ENCODE measurements at regions of chr21 and their contacts with region 1.

Region 1: GRCh38 chr21:29849735-29850176 is 90.0 kb downstream of the GRIK1 start:
- DNase-seq: peak; percentile 69
- H3K4me3 Mint-ChIP-seq: no peak overlapping the region
- H3K27ac Mint-ChIP-seq: no peak overlapping the region
- H3K4me1 Mint-ChIP-seq: no peaks in the 10 kb centered on the region
- H3K27me3 Mint-ChIP-seq: no peaks in the 10 kb centered on the region
- CTCF ChIP-seq: peak; percentile 77

Region 2: GRCh38 chr21:29423099-29423498 is 426.7 kb before region 1 on chr21:
- CTCF ChIA-PET with region 1: no interaction called
- POLR2A ChIA-PET with region 1: no interaction called
- intact Hi-C with region 1: no loop called
- DNase-seq: no peak
- H3K4me3 Mint-ChIP-seq: no peak overlapping the region
- H3K27ac Mint-ChIP-seq: no peak overlapping the region
- H3K4me1 Mint-ChIP-seq: no peaks in the 10 kb centered on the region
- H3K27me3 Mint-ChIP-seq: no peaks in the 10 kb centered on the region
- CTCF ChIP-seq: no peak

Region 3: DNA sequence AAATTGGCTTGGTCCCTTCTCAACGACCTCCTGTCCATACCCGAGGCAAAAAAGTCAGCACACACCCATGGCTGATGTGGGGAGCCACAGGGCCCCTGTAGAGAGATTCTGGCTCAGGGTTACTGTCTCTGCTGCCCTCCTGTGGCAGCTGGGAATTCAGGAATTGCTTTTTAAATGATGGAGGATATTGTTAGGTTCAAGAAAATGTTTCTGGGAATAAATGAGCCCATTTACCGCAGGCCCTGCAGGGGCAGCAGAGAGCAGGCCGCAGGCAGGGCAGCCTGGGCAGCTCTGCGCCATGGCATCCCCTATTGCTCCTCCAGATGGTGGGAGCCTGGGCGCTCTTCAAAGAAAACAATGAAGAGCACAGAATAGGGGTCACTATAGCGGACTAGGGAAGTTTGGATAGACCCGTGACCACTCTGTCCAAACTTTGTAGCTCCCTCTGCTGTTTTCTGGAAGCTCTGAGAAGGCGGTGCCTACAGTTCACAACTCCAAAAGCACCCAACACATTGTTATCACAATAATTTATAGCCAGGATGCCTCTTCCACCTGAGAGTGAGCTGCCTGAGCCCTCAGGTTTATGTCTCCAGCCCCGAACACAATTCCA is 349.9 kb before region 1 on chr21:
- CTCF ChIA-PET with region 1: interaction called, 5 read pairs
- POLR2A ChIA-PET with region 1: interaction called, 3 read pairs
- intact Hi-C with region 1: loop called (anchors 5 kb)
- DNase-seq: peak; percentile 52
- H3K4me3 Mint-ChIP-seq: no peak overlapping the region
- H3K27ac Mint-ChIP-seq: no peak overlapping the region
- H3K4me1 Mint-ChIP-seq: peaks cover 6% of the 10 kb centered on the region
- H3K27me3 Mint-ChIP-seq: no peaks in the 10 kb centered on the region
- CTCF ChIP-seq: peak; percentile 48

Region 4: GRCh38 chr21:29860346-29860745 is 10.6 kb after region 1 on chr21:
- CTCF ChIA-PET with region 1: interaction called, 10 read pairs
- POLR2A ChIA-PET with region 1: no interaction called
- intact Hi-C with region 1: no loop called
- DNase-seq: no peak
- H3K4me3 Mint-ChIP-seq: no peak overlapping the region
- H3K27ac Mint-ChIP-seq: no peak overlapping the region
- H3K4me1 Mint-ChIP-seq: no peaks in the 10 kb centered on the region
- H3K27me3 Mint-ChIP-seq: peaks cover 20% of the 10 kb centered on the region
- CTCF ChIP-seq: no peak

Region 5: DNA sequence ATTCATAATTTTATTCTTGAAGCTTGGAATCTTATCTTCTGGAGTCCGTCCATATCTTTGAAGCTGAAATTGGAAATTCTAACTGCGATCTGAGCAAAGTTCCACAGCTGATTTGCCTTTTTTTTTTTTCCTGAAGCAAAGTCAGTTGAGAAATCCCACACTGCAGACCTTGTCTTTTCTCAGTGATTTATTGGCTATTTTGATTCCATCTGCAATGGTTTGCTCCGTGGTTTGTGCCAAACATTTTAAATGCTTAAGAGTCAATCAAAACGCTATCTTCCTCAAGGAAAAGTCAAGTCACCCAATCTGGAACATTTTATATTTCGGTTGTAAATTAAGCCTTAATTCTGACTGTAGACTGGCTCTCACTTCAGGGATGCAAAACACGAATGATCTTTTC is 178.2 kb after region 1 on chr21:
- CTCF ChIA-PET with region 1: no interaction called
- POLR2A ChIA-PET with region 1: no interaction called
- intact Hi-C with region 1: no loop called
- DNase-seq: no peak
- H3K4me3 Mint-ChIP-seq: no peak overlapping the region
- H3K27ac Mint-ChIP-seq: no peak overlapping the region
- H3K4me1 Mint-ChIP-seq: no peaks in the 10 kb centered on the region
- H3K27me3 Mint-ChIP-seq: peaks cover 16% of the 10 kb centered on the region
- CTCF ChIP-seq: no peak

Region 6: DNA sequence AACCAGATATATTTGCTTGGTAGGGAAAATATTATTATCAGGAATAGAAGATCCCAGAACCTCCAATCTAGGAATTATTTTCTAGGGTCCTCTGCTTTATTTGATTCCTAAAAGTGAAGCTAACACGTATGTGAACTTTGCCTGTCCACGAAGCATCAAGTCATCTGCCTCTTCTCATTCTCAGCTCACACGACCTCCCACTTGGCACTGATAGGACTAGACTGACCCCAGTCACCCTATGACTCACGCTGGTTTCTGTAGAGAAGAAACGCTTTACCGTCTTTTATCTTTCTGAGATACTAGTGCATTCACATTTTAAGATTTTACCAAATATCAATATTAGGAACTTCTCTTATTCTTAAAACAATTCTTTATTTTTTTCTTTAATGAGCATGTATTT is 713.3 kb after region 1 on chr21:
- CTCF ChIA-PET with region 1: no interaction called
- POLR2A ChIA-PET with region 1: no interaction called
- intact Hi-C with region 1: no loop called
- DNase-seq: no peak
- H3K4me3 Mint-ChIP-seq: no peak overlapping the region
- H3K27ac Mint-ChIP-seq: no peak overlapping the region
- H3K4me1 Mint-ChIP-seq: no peaks in the 10 kb centered on the region
- H3K27me3 Mint-ChIP-seq: no peaks in the 10 kb centered on the region
- CTCF ChIP-seq: no peak

Region 7: GRCh38 chr21:31343680-31344480 is 1494.1 kb after region 1 on chr21 and contains the start of gene TIAM1:
- CTCF ChIA-PET with region 1: no interaction called
- POLR2A ChIA-PET with region 1: no interaction called
- intact Hi-C with region 1: no loop called
- DNase-seq: peak; percentile 86
- H3K4me3 Mint-ChIP-seq: peak within 1 kb of the TSS; percentile 96
- H3K27ac Mint-ChIP-seq: peak within 1 kb of the TSS; percentile 92
- H3K4me1 Mint-ChIP-seq: peaks cover 21% of the 10 kb centered on the region
- H3K27me3 Mint-ChIP-seq: no peaks in the 10 kb centered on the region
- CTCF ChIP-seq: no peak
- total RNA-seq, gene TIAM1: 9.0 and 9.8 TPM in 2 replicates

Measured in MCF 10A (cell line).